ENCODE measurements at regions of chr2 and their contacts with region 1.

Region 1: DNA sequence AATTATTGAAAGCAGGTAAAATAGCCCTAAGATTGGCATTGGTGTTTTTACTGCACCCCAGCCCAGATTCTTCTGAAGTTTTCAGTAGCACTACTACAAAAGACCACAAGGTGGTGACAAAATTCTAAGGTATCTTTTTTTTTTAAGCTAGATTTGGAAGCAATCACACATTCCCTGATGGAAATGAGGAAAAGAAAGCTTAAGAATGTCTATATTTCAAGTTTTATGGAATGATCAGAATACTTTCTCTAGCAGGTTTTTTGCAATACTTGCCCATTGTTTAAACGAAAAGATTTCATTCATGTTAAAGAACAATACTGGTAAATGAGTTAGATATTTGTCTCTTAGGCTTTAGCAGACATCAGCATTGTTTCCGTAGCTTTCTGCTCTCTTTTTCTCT is 32.1 kb upstream of the ZNF638 start:
- DNase-seq: no peak
- ATAC-seq: no peak
- H3K4me3 Mint-ChIP-seq: no peak overlapping the region
- H3K27ac Mint-ChIP-seq: no peak overlapping the region
- H3K4me1 Mint-ChIP-seq: no peaks in the 10 kb centered on the region
- H3K27me3 Mint-ChIP-seq: peaks cover 1% of the 10 kb centered on the region
- CTCF ChIP-seq: peak; percentile 93

Region 2: GRCh38 chr2:71282495-71282894 is 17.0 kb before region 1 on chr2:
- CTCF ChIA-PET with region 1: interaction called, 15 read pairs
- POLR2A ChIA-PET with region 1: no interaction called
- intact Hi-C with region 1: no loop called
- DNase-seq: no peak
- ATAC-seq: peak; percentile 27
- H3K4me3 Mint-ChIP-seq: no peak overlapping the region
- H3K27ac Mint-ChIP-seq: no peak overlapping the region
- H3K4me1 Mint-ChIP-seq: peaks cover 5% of the 10 kb centered on the region
- H3K27me3 Mint-ChIP-seq: peaks cover 50% of the 10 kb centered on the region
- CTCF ChIP-seq: no peak

Region 3: GRCh38 chr2:71331581-71332434 is 32.3 kb after region 1 on chr2 and contains the start of gene ZNF638:
- CTCF ChIA-PET with region 1: interaction called, 20 read pairs
- POLR2A ChIA-PET with region 1: no interaction called
- intact Hi-C with region 1: no loop called
- DNase-seq: peak; percentile 94
- ATAC-seq: peak; percentile 99
- H3K4me3 Mint-ChIP-seq: peak within 1 kb of the TSS; percentile 93
- H3K27ac Mint-ChIP-seq: peak within 1 kb of the TSS; percentile 99
- H3K4me1 Mint-ChIP-seq: peaks cover 26% of the 10 kb centered on the region
- H3K27me3 Mint-ChIP-seq: no peaks in the 10 kb centered on the region
- CTCF ChIP-seq: peak; percentile 76
- total RNA-seq, gene ZNF638: 81.1 to 86.0 TPM

Region 4: GRCh38 chr2:71460595-71461303 is 161.2 kb after region 1 on chr2:
- CTCF ChIA-PET with region 1: interaction called, 11 read pairs
- POLR2A ChIA-PET with region 1: no interaction called
- intact Hi-C with region 1: no loop called
- DNase-seq: no peak
- ATAC-seq: no peak
- H3K4me3 Mint-ChIP-seq: no peak overlapping the region
- H3K27ac Mint-ChIP-seq: no peak overlapping the region
- H3K4me1 Mint-ChIP-seq: peaks cover 2% of the 10 kb centered on the region
- H3K27me3 Mint-ChIP-seq: peaks cover 6% of the 10 kb centered on the region
- CTCF ChIP-seq: peak; percentile 67

Region 5: DNA sequence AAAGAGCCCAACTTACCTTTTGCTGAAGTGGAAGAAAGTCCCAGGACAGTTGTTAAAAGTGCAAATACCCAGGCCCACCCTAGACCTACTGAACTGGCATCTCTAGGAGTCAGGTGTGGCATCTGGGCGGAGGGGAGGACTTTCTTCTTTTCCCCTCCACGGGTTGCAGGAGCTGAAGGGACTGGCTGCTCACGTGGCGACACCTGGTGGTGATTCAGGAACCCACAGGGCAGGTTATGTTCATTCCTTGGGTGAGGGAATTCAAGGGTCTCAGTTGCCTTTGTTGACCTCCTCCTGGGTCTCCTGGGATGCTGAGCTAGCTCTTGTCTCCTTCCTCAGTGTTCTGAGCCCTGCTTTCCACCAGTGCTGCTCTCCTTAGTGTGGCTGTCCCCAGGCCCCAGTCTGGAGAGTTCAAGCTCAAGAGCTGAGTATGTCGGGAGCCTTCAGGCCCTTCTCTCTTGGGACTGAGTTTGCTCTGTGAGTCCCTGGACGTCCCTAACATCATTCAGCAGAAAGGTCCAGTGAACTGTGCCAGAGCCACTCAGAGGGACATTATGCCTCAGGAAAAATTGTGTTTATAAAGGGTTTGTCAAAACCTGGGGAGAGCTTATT is 210.8 kb after region 1 on chr2:
- CTCF ChIA-PET with region 1: interaction called, 114 read pairs
- POLR2A ChIA-PET with region 1: no interaction called
- intact Hi-C with region 1: loop called (anchors 2 kb)
- DNase-seq: peak; percentile 82
- ATAC-seq: peak; percentile 74
- H3K4me3 Mint-ChIP-seq: no peak overlapping the region
- H3K27ac Mint-ChIP-seq: no peak overlapping the region
- H3K4me1 Mint-ChIP-seq: no peaks in the 10 kb centered on the region
- H3K27me3 Mint-ChIP-seq: peaks cover 2% of the 10 kb centered on the region
- CTCF ChIP-seq: peak; percentile 80